OCI-LY7 (cell line): ENCODE measurements at regions of chr20 and their contacts with region 1.

Region 1: GRCh38 chr20:39874049-39874888 is 814.8 kb downstream of the MAFB start:
- DNase-seq: peak; percentile 52
- H3K4me3 ChIP-seq: no peak overlapping the region
- H3K27ac ChIP-seq: no peak overlapping the region
- H3K4me1 ChIP-seq: no peaks in the 10 kb centered on the region
- CTCF ChIP-seq: peak; percentile 79

Region 2: GRCh38 chr20:39264506-39265172 is 609.6 kb before region 1 on chr20:
- CTCF ChIA-PET with region 1: no interaction called
- POLR2A ChIA-PET with region 1: no interaction called
- intact Hi-C with region 1: loop called (anchors 5 kb)
- DNase-seq: peak; percentile 46
- H3K4me3 ChIP-seq: no peak overlapping the region
- H3K27ac ChIP-seq: no peak overlapping the region
- H3K4me1 ChIP-seq: no peaks in the 10 kb centered on the region
- CTCF ChIP-seq: peak; percentile 96